H1 (cell line): ENCODE measurements at regions of chr10 and their contacts with region 1.

Region 1: DNA sequence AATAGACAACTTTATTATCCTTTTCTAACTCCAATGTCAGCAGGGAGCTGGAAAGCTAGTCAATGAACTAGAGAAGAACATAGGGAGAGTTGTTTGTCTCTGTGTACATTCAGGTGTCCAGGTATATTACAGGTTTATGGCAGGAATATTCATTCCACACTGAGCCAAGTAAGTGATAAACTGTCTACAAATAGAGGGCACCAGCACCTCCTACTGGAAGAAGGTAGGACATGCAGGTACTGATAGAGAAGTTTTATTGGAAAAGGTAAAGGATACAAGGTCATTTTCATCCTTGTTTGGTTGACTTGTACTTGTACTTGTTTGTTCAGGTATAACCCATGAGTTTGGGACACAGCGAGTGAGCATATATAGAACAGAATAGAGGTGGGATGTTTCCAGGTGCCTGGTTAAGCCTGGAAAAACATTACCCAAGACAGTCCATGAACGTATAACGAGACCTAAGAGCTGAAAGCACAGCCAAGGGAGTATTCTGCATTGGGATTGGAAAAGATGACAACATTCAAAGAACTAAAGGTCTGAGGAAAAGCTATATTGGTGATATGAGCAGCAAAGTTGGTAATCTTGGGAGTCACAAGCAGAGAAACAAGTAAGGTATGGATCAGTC is 61.4 kb upstream of the PPP1R3C start:
- DNase-seq: no peak
- H3K4me3 ChIP-seq: no peak overlapping the region
- H3K27ac ChIP-seq: no peak overlapping the region
- H3K4me1 ChIP-seq: no peaks in the 10 kb centered on the region
- H3K27me3 ChIP-seq: no peaks in the 10 kb centered on the region
- CTCF ChIP-seq: peak in 2 of 3 experiments; percentile 63 to 88; a peak in 3 of 4 replicates
- EP300 ChIP-seq: no peak
- POLR2A ChIP-seq: no peak
- RAD21 ChIP-seq: peak; percentile 85 to 87

Region 2: GRCh38 chr10:91558473-91558872 is 135.8 kb before region 1 on chr10:
- CTCF ChIA-PET with region 1: interaction called, 11 read pairs
- POLR2A ChIA-PET with region 1: no interaction called
- DNase-seq: no peak
- H3K4me3 ChIP-seq: no peak overlapping the region
- H3K27ac ChIP-seq: no peak overlapping the region
- H3K4me1 ChIP-seq: no peaks in the 10 kb centered on the region
- H3K27me3 ChIP-seq: no peaks in the 10 kb centered on the region
- CTCF ChIP-seq: no peak
- EP300 ChIP-seq: no peak
- POLR2A ChIP-seq: no peak
- RAD21 ChIP-seq: no peak

Region 3: GRCh38 chr10:91652364-91652763 is 41.9 kb before region 1 on chr10:
- CTCF ChIA-PET with region 1: interaction called, 17 read pairs
- POLR2A ChIA-PET with region 1: no interaction called
- DNase-seq: no peak
- H3K4me3 ChIP-seq: no peak overlapping the region
- H3K27ac ChIP-seq: no peak overlapping the region
- H3K4me1 ChIP-seq: no peaks in the 10 kb centered on the region
- H3K27me3 ChIP-seq: no peaks in the 10 kb centered on the region
- CTCF ChIP-seq: no peak
- EP300 ChIP-seq: no peak
- POLR2A ChIP-seq: no peak
- RAD21 ChIP-seq: no peak

Region 4: GRCh38 chr10:91672021-91672608 is 22.2 kb before region 1 on chr10:
- CTCF ChIA-PET with region 1: interaction called, 30 read pairs
- POLR2A ChIA-PET with region 1: no interaction called
- DNase-seq: no peak
- H3K4me3 ChIP-seq: no peak overlapping the region
- H3K27ac ChIP-seq: no peak overlapping the region
- H3K4me1 ChIP-seq: peaks cover 0 to 7% (median 2%) of the 10 kb centered on the region in 4 experiments; a peak in 5 of 7 replicates
- H3K27me3 ChIP-seq: no peaks in the 10 kb centered on the region
- CTCF ChIP-seq: no peak
- EP300 ChIP-seq: no peak
- POLR2A ChIP-seq: no peak
- RAD21 ChIP-seq: no peak

Region 5: GRCh38 chr10:91708174-91708861 is 14.0 kb after region 1 on chr10:
- CTCF ChIA-PET with region 1: interaction called, 26 read pairs
- POLR2A ChIA-PET with region 1: interaction called, 4 read pairs
- DNase-seq: no peak
- H3K4me3 ChIP-seq: no peak overlapping the region
- H3K27ac ChIP-seq: no peak overlapping the region
- H3K4me1 ChIP-seq: no peaks in the 10 kb centered on the region
- H3K27me3 ChIP-seq: no peaks in the 10 kb centered on the region
- CTCF ChIP-seq: no peak
- EP300 ChIP-seq: no peak
- POLR2A ChIP-seq: no peak
- RAD21 ChIP-seq: no peak

Region 6: GRCh38 chr10:91724933-91725332 is 30.7 kb after region 1 on chr10:
- CTCF ChIA-PET with region 1: interaction called, 19 read pairs
- POLR2A ChIA-PET with region 1: no interaction called
- DNase-seq: no peak
- H3K4me3 ChIP-seq: no peak overlapping the region
- H3K27ac ChIP-seq: no peak overlapping the region
- H3K4me1 ChIP-seq: no peaks in the 10 kb centered on the region
- H3K27me3 ChIP-seq: no peaks in the 10 kb centered on the region
- CTCF ChIP-seq: no peak
- EP300 ChIP-seq: no peak
- POLR2A ChIP-seq: no peak
- RAD21 ChIP-seq: no peak

Region 7: GRCh38 chr10:91843083-91843482 is 148.8 kb after region 1 on chr10:
- CTCF ChIA-PET with region 1: no interaction called
- POLR2A ChIA-PET with region 1: no interaction called
- DNase-seq: no peak
- H3K4me3 ChIP-seq: no peak overlapping the region
- H3K27ac ChIP-seq: no peak overlapping the region
- H3K4me1 ChIP-seq: no peaks in the 10 kb centered on the region
- H3K27me3 ChIP-seq: no peaks in the 10 kb centered on the region
- CTCF ChIP-seq: no peak
- EP300 ChIP-seq: no peak
- POLR2A ChIP-seq: no peak
- RAD21 ChIP-seq: no peak